Natural killer cell (primary cell): ENCODE measurements at regions of chr14 and their contacts with region 1.

Region 1: GRCh38 chr14:70955543-70956480 is 48.6 kb downstream of the PCNX1 start:
- DNase-seq: peak in 1 of 2 donors; percentile 79
- ATAC-seq: peak in 2 of 3 donors; percentile 88 to 92
- H3K4me3 ChIP-seq: no peak overlapping the region
- H3K4me3 Mint-ChIP-seq: no peak overlapping the region
- H3K27ac ChIP-seq: no peak overlapping the region
- H3K27ac Mint-ChIP-seq: peak overlapping the region in 1 of 2 donors; percentile 50
- H3K4me1 ChIP-seq: peaks cover 5% of the 10 kb centered on the region
- H3K4me1 Mint-ChIP-seq: peaks cover 12 to 13% of the 10 kb centered on the region in 2 donors
- H3K27me3 ChIP-seq: no peaks in the 10 kb centered on the region
- H3K27me3 Mint-ChIP-seq: no peaks in the 10 kb centered on the region
- CTCF ChIP-seq: peak; percentile 62

Region 2: DNA sequence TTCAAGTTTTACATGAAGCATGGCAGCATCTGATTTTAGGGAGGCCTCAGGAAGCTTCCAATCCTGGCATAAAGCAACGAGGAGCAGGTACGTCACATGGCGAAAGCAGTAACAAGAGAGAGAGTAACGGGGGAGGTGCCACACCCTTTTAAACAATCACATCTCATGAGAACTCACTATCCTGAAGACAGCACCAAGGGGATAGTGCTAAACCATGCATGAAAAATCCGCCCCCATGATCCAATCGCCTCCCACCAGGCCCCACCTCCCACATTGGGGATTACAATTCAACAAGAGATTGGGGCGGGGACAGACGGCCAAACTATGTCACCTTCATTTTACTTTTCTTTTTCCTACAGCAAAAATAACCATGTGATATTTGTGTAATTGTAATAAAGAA is 139.3 kb before region 1 on chr14:
- intact Hi-C with region 1: loop called (anchors 2 kb)
- DNase-seq: no peak
- ATAC-seq: no peak
- H3K4me3 ChIP-seq: no peak overlapping the region
- H3K4me3 Mint-ChIP-seq: no peak overlapping the region
- H3K27ac ChIP-seq: no peak overlapping the region
- H3K27ac Mint-ChIP-seq: no peak overlapping the region
- H3K4me1 ChIP-seq: peaks cover 10% of the 10 kb centered on the region
- H3K4me1 Mint-ChIP-seq: peaks cover 6 to 8% of the 10 kb centered on the region in 2 donors
- H3K27me3 ChIP-seq: peaks cover 14% of the 10 kb centered on the region
- H3K27me3 Mint-ChIP-seq: peaks cover 6 to 29% of the 10 kb centered on the region in 2 donors
- CTCF ChIP-seq: no peak

Region 3: GRCh38 chr14:70907176-70907995 is 48.4 kb before region 1 on chr14 and contains the start of gene PCNX1:
- intact Hi-C with region 1: loop called (anchors 1 kb)
- DNase-seq: peak; percentile 89 to 93
- ATAC-seq: peak; percentile 81 to 92 (median 84)
- H3K4me3 ChIP-seq: peak within 1 kb of the TSS; percentile 97
- H3K4me3 Mint-ChIP-seq: peak within 1 kb of the TSS; percentile 93
- H3K27ac ChIP-seq: peak within 1 kb of the TSS; percentile 93
- H3K27ac Mint-ChIP-seq: peak within 1 kb of the TSS; percentile 92 to 100
- H3K4me1 ChIP-seq: peaks cover 15% of the 10 kb centered on the region
- H3K4me1 Mint-ChIP-seq: peaks cover 45 to 47% of the 10 kb centered on the region in 2 donors
- H3K27me3 ChIP-seq: no peaks in the 10 kb centered on the region
- H3K27me3 Mint-ChIP-seq: no peaks in the 10 kb centered on the region
- CTCF ChIP-seq: peak; percentile 85
- total RNA-seq, gene PCNX1: 79.8 to 124 (median 119) TPM

Region 4: DNA sequence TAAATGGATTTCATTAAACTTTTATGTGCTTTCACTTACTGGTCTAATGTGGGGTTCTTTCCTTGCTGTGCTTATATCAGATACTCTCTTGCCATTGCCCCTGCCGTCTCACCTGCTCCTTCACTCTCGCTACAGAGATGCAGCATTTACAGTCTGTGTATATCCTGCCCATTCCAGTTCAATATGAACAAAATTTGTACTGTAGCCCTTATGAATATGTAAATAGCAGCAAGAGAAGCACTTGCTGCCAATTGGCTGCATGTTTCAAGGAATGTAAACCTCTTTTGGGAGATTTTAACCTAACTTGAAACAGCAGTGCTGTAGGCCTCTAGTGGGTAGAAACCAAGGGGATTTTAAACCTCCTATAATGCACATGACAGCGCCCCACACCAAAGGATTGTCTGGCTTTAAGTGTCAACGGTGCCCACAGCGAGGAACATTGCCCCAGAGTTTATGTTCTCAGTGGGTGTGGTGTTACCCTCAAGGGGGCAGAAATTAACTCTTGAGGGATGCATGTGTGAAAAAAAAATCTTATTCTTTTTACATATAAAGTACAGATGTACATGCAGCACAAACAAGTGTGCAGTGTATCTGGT is 29.5 kb before region 1 on chr14:
- intact Hi-C with region 1: loop called (anchors 2 kb)
- DNase-seq: peak in 1 of 2 donors; percentile 57
- ATAC-seq: peak; percentile 83 to 91 (median 84)
- H3K4me3 ChIP-seq: no peak overlapping the region
- H3K4me3 Mint-ChIP-seq: peak overlapping the region; percentile 61
- H3K27ac ChIP-seq: no peak overlapping the region
- H3K27ac Mint-ChIP-seq: peak overlapping the region; percentile 78 to 87
- H3K4me1 ChIP-seq: peaks cover 26% of the 10 kb centered on the region
- H3K4me1 Mint-ChIP-seq: peaks cover 25 to 70% of the 10 kb centered on the region in 2 donors
- H3K27me3 ChIP-seq: no peaks in the 10 kb centered on the region
- H3K27me3 Mint-ChIP-seq: no peaks in the 10 kb centered on the region
- CTCF ChIP-seq: no peak

Region 5: GRCh38 chr14:71103662-71104484 is 148.1 kb after region 1 on chr14:
- intact Hi-C with region 1: no loop called
- DNase-seq: peak in 1 of 2 donors; percentile 71
- ATAC-seq: peak; percentile 62 to 68 (median 63)
- H3K4me3 ChIP-seq: no peak overlapping the region
- H3K4me3 Mint-ChIP-seq: no peak overlapping the region
- H3K27ac ChIP-seq: no peak overlapping the region
- H3K27ac Mint-ChIP-seq: no peak overlapping the region
- H3K4me1 ChIP-seq: no peaks in the 10 kb centered on the region
- H3K4me1 Mint-ChIP-seq: peaks cover 9 to 15% of the 10 kb centered on the region in 2 donors
- H3K27me3 ChIP-seq: no peaks in the 10 kb centered on the region
- H3K27me3 Mint-ChIP-seq: no peaks in the 10 kb centered on the region
- CTCF ChIP-seq: peak; percentile 95